ENCODE measurements at regions of chr5 and their contacts with region 1.

Region 1: GRCh38 chr5:172006321-172007174 is at the start of gene FBXW11:
- DNase-seq: peak; percentile 87
- ATAC-seq: peak; percentile 84
- H3K4me3 Mint-ChIP-seq: peak within 1 kb of the TSS; percentile 93
- H3K27ac Mint-ChIP-seq: peak within 1 kb of the TSS; percentile 96
- H3K4me1 Mint-ChIP-seq: peaks cover 51% of the 10 kb centered on the region
- H3K27me3 Mint-ChIP-seq: no peaks in the 10 kb centered on the region
- CTCF ChIP-seq: no peak
- total RNA-seq, gene FBXW11: 46.5 and 52.7 TPM in 2 replicates

Region 2: GRCh38 chr5:171907725-171908343 is 98.7 kb before region 1 on chr5:
- CTCF ChIA-PET with region 1: interaction called, 61 read pairs
- POLR2A ChIA-PET with region 1: interaction called, 25 read pairs
- intact Hi-C with region 1: loop called (anchors 1 kb)
- DNase-seq: no peak
- ATAC-seq: peak; percentile 73
- H3K4me3 Mint-ChIP-seq: no peak overlapping the region
- H3K27ac Mint-ChIP-seq: peak overlapping the region; percentile 15
- H3K4me1 Mint-ChIP-seq: peaks cover 49% of the 10 kb centered on the region
- H3K27me3 Mint-ChIP-seq: no peaks in the 10 kb centered on the region
- CTCF ChIP-seq: no peak

Region 3: DNA sequence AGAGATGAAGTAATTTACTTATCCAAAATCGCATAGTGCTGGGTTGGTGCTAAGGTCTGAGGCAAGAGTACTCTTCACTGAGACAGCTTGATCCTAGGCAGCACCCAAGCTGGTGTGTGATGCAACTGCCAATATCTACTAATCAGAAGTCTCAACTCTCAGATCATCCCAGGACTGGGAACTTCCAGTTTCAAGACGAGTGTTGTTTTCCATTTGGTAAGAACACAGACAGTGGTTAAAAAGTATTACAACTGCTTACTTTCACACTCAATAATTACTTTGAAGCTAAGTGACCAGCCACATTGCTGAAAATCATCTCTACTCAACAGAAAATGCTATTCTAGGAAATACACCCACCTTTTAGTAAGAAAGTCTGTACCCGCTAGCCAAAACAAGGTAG is 45.4 kb before region 1 on chr5:
- CTCF ChIA-PET with region 1: interaction called, 3 read pairs
- POLR2A ChIA-PET with region 1: interaction called, 10 read pairs
- intact Hi-C with region 1: loop called (anchors 5 kb)
- DNase-seq: no peak
- ATAC-seq: peak; percentile 45
- H3K4me3 Mint-ChIP-seq: no peak overlapping the region
- H3K27ac Mint-ChIP-seq: peak overlapping the region; percentile 61
- H3K4me1 Mint-ChIP-seq: peaks cover 92% of the 10 kb centered on the region
- H3K27me3 Mint-ChIP-seq: no peaks in the 10 kb centered on the region
- CTCF ChIP-seq: no peak

Region 4: GRCh38 chr5:172035039-172035438 is 28.5 kb after region 1 on chr5:
- CTCF ChIA-PET with region 1: interaction called, 7 read pairs
- POLR2A ChIA-PET with region 1: no interaction called
- intact Hi-C with region 1: loop called (anchors 2 kb)
- DNase-seq: no peak
- ATAC-seq: peak; percentile 62
- H3K4me3 Mint-ChIP-seq: no peak overlapping the region
- H3K27ac Mint-ChIP-seq: peak overlapping the region; percentile 18
- H3K4me1 Mint-ChIP-seq: peaks cover 16% of the 10 kb centered on the region
- H3K27me3 Mint-ChIP-seq: no peaks in the 10 kb centered on the region
- CTCF ChIP-seq: no peak

Region 5: GRCh38 chr5:172266071-172266675 is 259.6 kb after region 1 on chr5:
- CTCF ChIA-PET with region 1: no interaction called
- POLR2A ChIA-PET with region 1: no interaction called
- intact Hi-C with region 1: no loop called
- DNase-seq: no peak
- ATAC-seq: no peak
- H3K4me3 Mint-ChIP-seq: no peak overlapping the region
- H3K27ac Mint-ChIP-seq: peak overlapping the region; percentile 22
- H3K4me1 Mint-ChIP-seq: peaks cover 6% of the 10 kb centered on the region
- H3K27me3 Mint-ChIP-seq: no peaks in the 10 kb centered on the region
- CTCF ChIP-seq: no peak

Region 6: DNA sequence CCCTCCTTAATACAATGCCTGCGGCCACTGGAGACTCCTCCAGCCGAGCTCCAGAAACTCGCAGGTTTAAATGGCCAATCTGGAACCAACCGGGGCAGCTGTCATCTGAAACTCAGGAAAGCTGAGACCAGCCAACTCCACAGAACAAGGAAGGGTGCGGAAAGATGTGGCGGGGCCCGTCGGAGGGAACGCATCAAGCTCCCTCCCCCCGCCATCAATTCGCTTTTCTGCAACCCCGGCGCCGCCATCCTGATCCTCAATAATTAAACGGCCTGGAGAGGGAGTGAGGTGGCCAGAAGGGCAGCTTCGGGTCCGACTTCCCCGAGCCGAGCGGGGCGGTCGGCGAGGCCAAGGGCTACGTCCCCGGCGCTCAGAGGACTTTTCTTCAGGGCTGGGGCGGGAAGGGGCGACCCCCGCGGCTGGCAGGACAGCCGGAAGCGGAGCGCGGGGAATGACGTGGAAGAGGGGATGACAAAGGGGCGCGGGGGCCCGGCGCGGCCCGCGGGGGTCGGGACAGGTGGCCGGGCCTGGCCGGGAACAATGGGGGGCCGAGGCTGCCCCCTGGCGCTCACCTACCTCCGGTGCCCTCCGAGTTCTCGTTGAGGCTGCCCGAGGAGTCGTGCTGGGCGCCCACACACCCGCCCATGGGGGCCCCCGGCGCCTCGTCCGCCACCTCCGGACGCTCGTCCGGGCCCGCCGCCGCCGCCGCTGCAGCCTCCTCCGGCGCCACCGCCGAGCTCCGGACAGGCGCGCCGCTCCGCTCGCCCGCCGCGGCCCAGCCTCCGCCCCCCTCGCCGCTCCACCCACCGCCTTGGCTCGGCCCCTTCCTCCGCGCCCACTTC is 276.7 kb after region 1 on chr5 and contains the start of gene UBTD2:
- CTCF ChIA-PET with region 1: no interaction called
- POLR2A ChIA-PET with region 1: interaction called, 7 read pairs
- intact Hi-C with region 1: loop called (anchors 1 kb)
- DNase-seq: peak; percentile 90
- ATAC-seq: peak; percentile 88
- H3K4me3 Mint-ChIP-seq: peak within 1 kb of the TSS; percentile 90
- H3K27ac Mint-ChIP-seq: peak within 1 kb of the TSS; percentile 68
- H3K4me1 Mint-ChIP-seq: peaks cover 23% of the 10 kb centered on the region
- H3K27me3 Mint-ChIP-seq: no peaks in the 10 kb centered on the region
- CTCF ChIP-seq: peak; percentile 50
- total RNA-seq, gene UBTD2: 8.5 and 9.0 TPM in 2 replicates

Region 7: DNA sequence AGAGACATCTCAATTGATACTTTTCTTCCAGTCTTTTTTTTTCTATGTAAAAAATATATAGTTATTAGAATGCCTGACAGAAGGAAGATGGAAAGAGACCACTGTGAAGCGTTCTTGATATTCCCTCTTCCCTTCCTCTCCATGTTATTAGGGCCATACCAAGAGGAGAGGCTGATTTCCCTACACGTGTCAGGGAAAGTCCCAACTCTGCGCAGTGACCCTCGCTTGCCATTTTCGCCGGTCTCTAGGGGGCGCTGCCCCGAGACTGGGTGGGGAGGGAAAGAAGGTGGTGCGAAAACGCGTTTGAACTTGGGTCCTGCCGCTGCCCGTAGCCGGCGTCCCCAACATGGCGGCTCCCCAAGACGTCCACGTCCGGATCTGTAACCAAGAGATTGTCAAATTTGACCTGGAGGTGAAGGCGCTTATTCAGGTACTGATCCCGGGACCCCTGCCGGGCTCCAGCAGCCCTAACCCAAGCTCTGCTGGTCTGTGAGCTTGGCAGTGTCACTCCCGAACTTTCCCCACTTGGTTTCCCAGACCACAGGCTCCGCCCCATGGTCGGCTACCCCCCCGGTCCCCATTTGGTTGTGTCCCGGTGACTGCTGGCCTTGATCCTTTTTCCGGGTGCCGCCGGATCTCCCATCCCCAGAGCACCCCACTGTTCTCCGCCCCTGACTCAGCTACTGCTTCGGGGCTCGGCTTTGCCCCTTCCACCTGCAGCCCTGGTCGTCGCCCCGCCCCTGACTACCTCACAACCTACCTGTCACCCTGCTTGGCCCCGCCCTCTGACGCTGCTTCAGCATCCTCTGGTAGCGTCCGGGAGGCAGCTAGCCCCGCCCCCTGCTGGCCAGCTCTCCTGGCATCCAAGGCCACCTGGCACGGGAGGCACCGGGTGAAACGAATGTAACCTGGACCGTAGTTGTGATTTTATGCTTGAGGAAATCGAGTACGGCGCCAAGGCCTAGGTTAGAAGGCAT is 1137.9 kb after region 1 on chr5 and contains the start of gene BNIP1:
- CTCF ChIA-PET with region 1: no interaction called
- POLR2A ChIA-PET with region 1: no interaction called
- intact Hi-C with region 1: loop called (anchors 2 kb)
- DNase-seq: peak; percentile 97
- ATAC-seq: peak; percentile 90
- H3K4me3 Mint-ChIP-seq: peak within 1 kb of the TSS; percentile 99
- H3K27ac Mint-ChIP-seq: peak within 1 kb of the TSS; percentile 97
- H3K4me1 Mint-ChIP-seq: peaks cover 12% of the 10 kb centered on the region
- H3K27me3 Mint-ChIP-seq: no peaks in the 10 kb centered on the region
- CTCF ChIP-seq: peak; percentile 54
- total RNA-seq, gene BNIP1: 17.9 and 20.2 TPM in 2 replicates